Heart left ventricle (tissue), 16 donors: ENCODE measurements at regions of chr2 and their contacts with region 1.

Region 1: DNA sequence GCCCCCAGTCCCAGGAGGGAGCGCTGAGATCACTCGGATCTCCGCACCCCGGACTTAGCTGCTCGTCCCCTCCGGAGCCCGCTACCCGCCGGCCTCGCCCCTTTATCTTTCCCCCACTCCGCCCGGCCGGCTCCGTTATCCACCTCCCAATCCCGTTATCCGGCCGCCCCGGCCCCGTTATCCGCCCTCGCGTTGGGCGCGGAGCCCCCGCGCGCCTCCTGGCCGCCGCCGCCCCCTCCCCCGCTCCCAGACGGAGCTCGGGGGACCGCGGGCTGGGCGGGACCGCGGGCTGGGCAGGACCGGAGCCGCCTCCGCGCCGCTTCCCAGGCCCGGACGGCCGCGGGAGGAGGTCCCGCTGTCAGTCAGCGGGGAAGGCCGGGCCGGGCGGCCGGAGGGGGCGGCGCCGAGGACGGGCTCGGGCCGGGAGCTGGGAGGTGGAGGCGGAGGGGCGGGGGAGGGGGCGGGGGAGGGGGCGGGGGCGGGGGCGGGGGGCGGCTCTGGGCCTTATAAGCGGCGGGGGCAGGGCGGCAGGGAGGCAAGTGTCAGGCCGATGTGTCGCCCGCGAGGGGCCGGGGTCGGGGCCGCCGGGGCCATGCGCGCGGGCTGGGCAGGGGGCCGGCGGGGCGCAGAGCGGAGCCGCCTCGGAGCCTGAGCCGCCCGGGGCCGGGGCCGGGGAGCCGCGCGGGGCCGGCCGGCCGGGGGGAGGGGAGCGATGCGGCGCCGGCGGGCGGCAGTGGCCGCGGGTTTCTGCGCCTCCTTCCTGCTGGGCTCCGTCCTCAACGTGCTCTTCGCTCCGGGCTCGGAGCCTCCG is at the start of gene PKDCC:
- DNase-seq: peak; percentile 90 to 93 (median 90)
- ATAC-seq: peak; percentile 76 to 90 (median 86)
- H3K4me3 ChIP-seq: peak within 1 kb of the TSS; percentile 66 to 96 (median 80)
- H3K27ac ChIP-seq: peak within 1 kb of the TSS; percentile 82 to 98 (median 91)
- H3K4me1 ChIP-seq: peaks cover 3 to 61% (median 22%) of the 10 kb centered on the region in 12 donors
- H3K27me3 ChIP-seq: peaks cover 0 to 39% (median 0%) of the 10 kb centered on the region in 9 donors
- CTCF ChIP-seq: no peak
- POLR2A ChIP-seq: peak in 1 of 2 donors; percentile 66
- total RNA-seq, gene PKDCC: 22.7 to 124 (median 53.0) TPM

Region 2: GRCh38 chr2:41933585-41934320 is 113.9 kb before region 1 on chr2:
- intact Hi-C with region 1: loop called in 5 of 10 experiments (anchors 5 kb)
- DNase-seq: no peak
- ATAC-seq: peak in 3 of 4 donors; percentile 12 to 53 (median 20)
- H3K4me3 ChIP-seq: no peak overlapping the region
- H3K27ac ChIP-seq: peak overlapping the region; percentile 12 to 78 (median 61)
- H3K4me1 ChIP-seq: peaks cover 0 to 64% (median 34%) of the 10 kb centered on the region in 12 donors
- H3K27me3 ChIP-seq: no peaks in the 10 kb centered on the region
- CTCF ChIP-seq: no peak
- POLR2A ChIP-seq: no peak

Region 3: GRCh38 chr2:41947701-41948396 is 99.8 kb before region 1 on chr2:
- intact Hi-C with region 1: loop called in 6 of 10 experiments (anchors 5 to 10 kb)
- DNase-seq: peak; percentile 67 to 83 (median 71)
- ATAC-seq: peak; percentile 95 to 98 (median 98)
- H3K4me3 ChIP-seq: no peak overlapping the region
- H3K27ac ChIP-seq: peak overlapping the region in 11 of 12 donors; percentile 10 to 90 (median 63)
- H3K4me1 ChIP-seq: peaks cover 0 to 54% (median 28%) of the 10 kb centered on the region in 12 donors
- H3K27me3 ChIP-seq: no peaks in the 10 kb centered on the region
- CTCF ChIP-seq: no peak
- POLR2A ChIP-seq: no peak

Region 4: GRCh38 chr2:41955316-41956043 is 92.2 kb before region 1 on chr2:
- intact Hi-C with region 1: loop called in 1 of 10 experiments (anchors 10 kb)
- DNase-seq: no peak
- ATAC-seq: peak in 1 of 4 donors; percentile 25
- H3K4me3 ChIP-seq: no peak overlapping the region
- H3K27ac ChIP-seq: no peak overlapping the region
- H3K4me1 ChIP-seq: peaks cover 0 to 8% (median 0%) of the 10 kb centered on the region in 12 donors
- H3K27me3 ChIP-seq: no peaks in the 10 kb centered on the region
- CTCF ChIP-seq: no peak
- POLR2A ChIP-seq: no peak

Region 5: GRCh38 chr2:42169100-42169873 is 121.6 kb after region 1 on chr2 and contains the start of gene EML4:
- intact Hi-C with region 1: no loop called
- DNase-seq: peak; percentile 91 to 97 (median 92)
- ATAC-seq: peak; percentile 97 to 98 (median 98)
- H3K4me3 ChIP-seq: peak within 1 kb of the TSS; percentile 57 to 96 (median 85)
- H3K27ac ChIP-seq: peak within 1 kb of the TSS in 11 of 12 donors; percentile 77 to 93 (median 87)
- H3K4me1 ChIP-seq: peaks cover 0 to 46% (median 25%) of the 10 kb centered on the region in 12 donors
- H3K27me3 ChIP-seq: no peaks in the 10 kb centered on the region
- CTCF ChIP-seq: no peak
- POLR2A ChIP-seq: peak in 1 of 2 donors; percentile 68
- total RNA-seq, gene EML4: 3.5 to 32.8 (median 5.7) TPM